Dendritic cell treated with granulocyte-macrophage colony-stimulating factor and Interleukin-4, amounts not matched to agents 40 ng/mL and 50 ng/mL, for 4 days (primary cell): ENCODE measurements at regions of chr9 and their contacts with region 1.

Region 1: DNA sequence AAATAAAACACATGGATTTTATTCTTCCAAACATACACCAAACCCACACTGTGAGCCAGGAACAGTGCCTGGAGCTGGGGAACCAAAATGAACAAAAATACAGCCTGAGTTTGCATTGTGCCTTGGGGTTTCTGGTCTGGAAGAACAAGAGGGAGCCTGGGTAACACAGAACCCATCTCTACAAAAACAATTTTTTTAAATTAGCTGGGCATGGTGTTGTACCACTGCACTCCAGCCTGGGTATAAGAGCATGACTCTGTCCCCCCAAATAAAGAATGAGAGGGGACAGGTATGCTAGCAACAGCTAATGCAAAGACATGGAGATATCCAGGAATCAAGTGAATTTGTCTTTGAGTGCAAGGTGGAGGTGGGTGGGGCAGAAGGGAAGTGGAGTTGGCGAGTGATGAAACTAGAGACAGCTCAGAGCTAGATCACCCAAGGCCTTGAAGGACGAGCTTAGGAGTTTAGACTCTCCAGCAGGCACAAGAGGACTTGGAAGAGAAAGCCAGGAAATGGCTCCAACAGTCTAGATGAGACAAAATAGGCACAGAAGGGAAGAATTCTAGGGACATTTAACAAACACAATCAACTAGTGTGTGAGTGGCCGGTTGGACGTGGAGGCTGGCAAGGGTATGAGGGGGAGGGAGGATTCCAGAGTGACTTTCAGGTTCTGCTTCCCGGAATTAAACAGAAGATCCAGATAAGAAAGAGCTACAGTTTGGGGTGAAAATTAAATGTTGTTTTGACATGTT is 47.4 kb downstream of the FNBP1 start:
- H3K4me3 Mint-ChIP-seq: peak overlapping the region; percentile 65
- H3K27ac Mint-ChIP-seq: peak overlapping the region; percentile 92
- H3K4me1 Mint-ChIP-seq: peaks cover 53% of the 10 kb centered on the region
- H3K27me3 Mint-ChIP-seq: no peaks in the 10 kb centered on the region

Region 2: DNA sequence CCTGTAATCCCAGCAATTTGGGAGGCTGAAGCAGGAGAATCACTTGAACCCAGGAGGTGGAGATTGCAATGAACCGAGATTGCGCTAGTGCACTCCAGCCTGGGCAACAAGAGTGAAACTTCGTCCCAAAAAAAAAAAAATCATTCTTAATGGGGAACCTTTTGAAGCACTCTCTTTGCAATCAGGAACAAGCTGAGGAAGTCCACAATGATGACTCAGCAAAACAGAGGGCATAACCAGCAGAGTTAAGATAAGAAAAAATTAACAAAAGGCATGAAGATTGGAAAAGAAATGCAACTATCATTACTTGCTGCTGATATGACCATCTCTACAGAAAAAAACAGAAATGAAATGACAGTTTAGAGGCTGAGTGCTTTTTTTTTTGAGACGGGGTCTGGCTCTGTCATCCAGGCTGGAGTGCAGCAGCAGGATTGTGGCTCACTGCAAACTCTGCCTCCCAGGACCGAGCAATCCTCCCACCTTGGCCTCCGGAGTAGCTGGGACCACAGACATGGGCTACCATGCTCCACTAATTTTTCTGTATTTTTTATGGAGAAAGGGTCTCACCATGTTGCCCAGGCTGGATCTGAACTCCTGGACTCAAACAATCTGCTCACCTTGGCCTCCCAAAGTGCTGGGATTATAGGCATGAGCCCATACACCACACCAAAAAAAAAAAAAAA is 40.6 kb before region 1 on chr9:
- intact Hi-C with region 1: loop called (anchors 5 kb)
- H3K4me3 Mint-ChIP-seq: peak overlapping the region; percentile 40
- H3K27ac Mint-ChIP-seq: peak overlapping the region; percentile 83
- H3K4me1 Mint-ChIP-seq: peaks cover 42% of the 10 kb centered on the region
- H3K27me3 Mint-ChIP-seq: no peaks in the 10 kb centered on the region

Region 3: GRCh38 chr9:130156672-130157071 is 161.1 kb after region 1 on chr9:
- intact Hi-C with region 1: no loop called
- H3K4me3 Mint-ChIP-seq: no peak overlapping the region
- H3K27ac Mint-ChIP-seq: no peak overlapping the region
- H3K4me1 Mint-ChIP-seq: peaks cover 9% of the 10 kb centered on the region
- H3K27me3 Mint-ChIP-seq: peaks cover 4% of the 10 kb centered on the region